ENCODE measurements at regions of chr1 and their contacts with region 1.

Region 1: GRCh38 chr1:167057241-167057688 is 32.9 kb downstream of the GPA33 start:
- DNase-seq: no peak
- ATAC-seq: peak; percentile 67

Region 2: DNA sequence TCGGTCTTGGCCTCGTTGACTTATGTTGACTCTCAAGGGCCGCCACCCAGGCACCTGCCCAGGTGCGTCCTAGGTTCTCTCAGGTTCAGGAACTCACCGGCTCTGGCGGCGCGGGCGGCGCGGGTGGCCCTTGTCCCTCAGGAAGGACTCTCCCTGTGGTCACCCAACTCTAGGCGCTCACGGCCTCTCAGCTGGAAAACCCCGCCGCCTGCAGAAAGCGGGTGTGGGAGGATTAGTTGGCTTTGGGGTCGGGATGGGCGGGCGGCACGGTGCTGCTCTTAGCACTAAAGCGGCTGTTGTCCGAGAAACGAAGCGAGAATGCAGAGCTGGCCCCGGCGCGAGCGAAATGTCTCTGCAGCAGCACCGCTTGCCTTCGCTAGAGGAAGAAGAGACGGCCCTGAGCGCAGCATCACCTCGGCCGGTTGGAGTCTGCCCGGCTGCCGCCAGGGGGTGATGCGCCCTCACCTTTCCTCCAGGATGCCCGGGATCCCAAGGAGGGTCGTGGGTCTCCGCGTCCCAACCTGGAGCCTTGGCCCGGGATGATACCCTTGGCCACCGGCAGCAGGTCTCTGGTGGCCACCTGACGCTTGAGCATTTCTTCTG is 173.1 kb before region 1 on chr1:
- intact Hi-C with region 1: loop called (anchors 1 kb)
- DNase-seq: no peak
- ATAC-seq: peak; percentile 65

Region 3: DNA sequence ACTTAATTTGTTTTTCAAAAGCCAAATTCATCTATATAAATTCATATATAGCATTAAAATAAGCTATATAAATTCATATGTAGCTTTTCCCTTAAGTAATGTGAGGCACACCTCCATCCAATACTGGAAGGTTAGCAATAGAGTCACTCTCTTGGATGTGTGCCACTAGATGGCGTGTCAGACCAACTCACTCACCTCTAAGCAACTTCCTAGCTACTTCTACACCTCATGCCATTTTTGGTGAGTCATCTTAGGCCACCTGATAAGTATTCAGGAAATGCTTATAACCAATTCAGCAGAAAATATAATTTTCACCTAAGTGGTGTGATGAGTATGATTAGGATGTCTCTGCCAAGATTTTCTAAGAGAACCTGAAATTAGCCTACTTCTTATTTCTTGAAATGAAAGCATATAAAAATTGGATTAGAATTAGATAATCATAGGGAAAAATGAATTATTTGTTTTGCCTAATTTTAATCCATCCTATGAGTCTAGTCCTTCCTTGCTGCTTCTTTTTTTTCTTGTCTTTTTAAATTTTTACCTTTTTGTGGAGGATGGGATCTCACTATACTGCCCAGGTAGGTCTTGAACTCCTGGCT is 146.8 kb before region 1 on chr1:
- intact Hi-C with region 1: loop called (anchors 1 kb)
- DNase-seq: no peak
- ATAC-seq: peak; percentile 84

Region 4: GRCh38 chr1:166947398-166948043 is 109.7 kb before region 1 on chr1:
- intact Hi-C with region 1: no loop called
- DNase-seq: peak; percentile 65
- ATAC-seq: peak; percentile 51

Region 5: DNA sequence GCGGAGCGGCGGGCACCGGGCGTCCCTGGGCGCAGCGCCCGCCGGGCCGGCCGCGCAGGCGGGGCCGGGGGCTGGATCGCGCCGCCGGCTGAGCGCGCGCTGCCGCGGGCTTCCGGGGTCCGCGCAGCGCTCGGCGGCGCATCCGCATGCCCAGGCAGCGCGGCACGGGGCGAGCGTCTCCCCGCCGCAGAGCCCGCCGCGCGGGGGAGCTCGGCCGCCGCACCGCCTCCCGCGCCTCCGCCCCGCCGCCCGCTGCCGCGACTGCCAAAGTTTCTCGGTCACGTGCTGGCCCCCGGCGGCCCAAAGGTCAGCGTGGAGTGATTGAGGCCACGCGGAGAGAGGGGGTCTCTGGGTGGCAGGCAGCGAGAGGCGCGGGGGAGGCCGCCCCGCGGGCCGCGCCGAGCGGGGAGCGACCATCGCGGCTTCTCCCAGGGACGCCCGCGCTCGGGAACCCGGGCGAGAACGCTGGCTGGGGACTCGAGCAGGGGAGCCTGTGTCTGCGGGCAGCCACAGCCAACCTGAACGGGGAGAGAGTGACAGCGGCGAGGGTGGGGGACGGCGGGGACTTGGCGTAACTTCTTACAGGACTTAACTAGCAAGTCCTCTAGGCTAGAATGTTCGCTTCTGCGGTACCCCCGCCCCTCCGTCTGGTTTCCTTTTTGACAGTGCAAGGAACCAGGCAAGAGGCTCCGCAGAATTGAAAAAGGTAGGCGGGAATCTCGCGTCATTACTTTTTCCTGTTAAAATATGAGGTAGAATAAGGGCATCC is 81.7 kb before region 1 on chr1 and contains the start of gene ILDR2:
- intact Hi-C with region 1: loop called (anchors 2 kb)
- DNase-seq: peak; percentile 73
- ATAC-seq: peak; percentile 82
- total RNA-seq, gene ILDR2: 1.8 TPM

Measured in Right ventricle myocardium inferior (tissue), 1 donor.